ENCODE measurements at regions of chr10 and their contacts with region 1.

Region 1: DNA sequence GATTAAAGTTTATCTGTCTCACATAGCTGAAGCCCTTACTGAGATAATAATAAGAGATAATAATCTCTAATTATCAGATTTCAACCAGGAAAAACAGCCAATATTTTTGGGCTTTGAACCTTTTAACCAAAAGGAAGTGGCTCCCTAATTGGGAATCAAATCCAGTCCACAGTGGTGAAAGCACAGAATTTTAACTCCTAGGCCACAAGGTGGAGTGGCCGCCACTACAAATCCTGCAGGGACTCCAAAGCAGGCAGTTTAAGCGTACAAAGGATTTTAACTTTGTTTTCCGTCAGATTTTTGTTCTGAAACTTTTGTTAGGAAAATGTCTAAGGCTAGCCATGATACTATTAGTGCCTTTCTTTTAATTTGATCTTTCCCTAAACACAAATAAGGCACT is 99.6 kb upstream of the CCNY start:
- DNase-seq: no peak
- H3K4me3 Mint-ChIP-seq: no peak overlapping the region
- H3K27ac Mint-ChIP-seq: no peak overlapping the region
- H3K4me1 Mint-ChIP-seq: no peaks in the 10 kb centered on the region
- H3K27me3 Mint-ChIP-seq: no peaks in the 10 kb centered on the region
- CTCF ChIP-seq: no peak

Region 2: GRCh38 chr10:35225204-35225603 is 11.5 kb before region 1 on chr10:
- CTCF ChIA-PET with region 1: no interaction called
- intact Hi-C with region 1: no loop called
- DNase-seq: no peak
- H3K4me3 Mint-ChIP-seq: no peak overlapping the region
- H3K27ac Mint-ChIP-seq: no peak overlapping the region
- H3K4me1 Mint-ChIP-seq: no peaks in the 10 kb centered on the region
- H3K27me3 Mint-ChIP-seq: no peaks in the 10 kb centered on the region
- CTCF ChIP-seq: no peak

Region 3: DNA sequence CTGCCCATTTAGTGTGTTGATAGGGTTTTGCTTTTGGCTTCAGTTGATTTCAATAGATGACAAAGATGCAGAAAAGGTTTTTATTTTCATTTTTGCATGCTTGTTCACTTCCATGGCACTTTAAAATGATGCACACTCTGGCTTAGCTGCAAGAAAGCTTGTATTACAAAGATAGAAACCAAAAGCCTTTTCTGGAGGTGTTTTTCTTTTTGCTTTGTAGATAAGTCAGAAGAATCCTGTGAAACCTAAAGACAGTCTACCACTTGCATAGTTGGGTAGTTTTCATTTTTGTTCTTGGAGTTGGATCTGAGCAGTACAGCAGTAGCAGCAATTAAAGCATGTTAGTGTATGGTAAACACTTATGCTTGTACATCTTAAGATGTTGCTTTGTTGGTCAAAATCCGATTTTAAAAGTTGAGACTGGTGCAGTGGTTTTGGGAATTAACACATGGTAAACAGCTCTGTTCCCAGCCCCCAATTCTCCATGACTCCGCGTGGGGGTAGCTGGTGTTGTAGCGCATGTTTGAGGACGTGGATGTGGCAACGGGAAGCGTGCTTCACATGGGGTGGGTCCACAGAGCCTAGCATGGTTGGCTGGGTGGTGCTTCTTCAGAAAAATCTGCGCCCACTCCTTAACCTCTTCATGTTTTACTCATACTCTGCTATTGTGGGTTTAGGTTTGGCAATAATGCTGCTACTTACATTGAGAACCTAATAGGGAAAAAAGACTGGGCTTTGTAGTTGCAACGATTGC is 119.4 kb after region 1 on chr10:
- CTCF ChIA-PET with region 1: no interaction called
- intact Hi-C with region 1: no loop called
- DNase-seq: no peak
- H3K4me3 Mint-ChIP-seq: no peak overlapping the region
- H3K27ac Mint-ChIP-seq: no peak overlapping the region
- H3K4me1 Mint-ChIP-seq: peaks cover 21% of the 10 kb centered on the region
- H3K27me3 Mint-ChIP-seq: no peaks in the 10 kb centered on the region
- CTCF ChIP-seq: no peak

Region 4: GRCh38 chr10:35563261-35563891 is 326.6 kb after region 1 on chr10:
- CTCF ChIA-PET with region 1: no interaction called
- intact Hi-C with region 1: loop called (anchors 5 kb)
- DNase-seq: peak; percentile 69
- H3K4me3 Mint-ChIP-seq: no peak overlapping the region
- H3K27ac Mint-ChIP-seq: no peak overlapping the region
- H3K4me1 Mint-ChIP-seq: no peaks in the 10 kb centered on the region
- H3K27me3 Mint-ChIP-seq: no peaks in the 10 kb centered on the region
- CTCF ChIP-seq: peak; percentile 94

Region 5: DNA sequence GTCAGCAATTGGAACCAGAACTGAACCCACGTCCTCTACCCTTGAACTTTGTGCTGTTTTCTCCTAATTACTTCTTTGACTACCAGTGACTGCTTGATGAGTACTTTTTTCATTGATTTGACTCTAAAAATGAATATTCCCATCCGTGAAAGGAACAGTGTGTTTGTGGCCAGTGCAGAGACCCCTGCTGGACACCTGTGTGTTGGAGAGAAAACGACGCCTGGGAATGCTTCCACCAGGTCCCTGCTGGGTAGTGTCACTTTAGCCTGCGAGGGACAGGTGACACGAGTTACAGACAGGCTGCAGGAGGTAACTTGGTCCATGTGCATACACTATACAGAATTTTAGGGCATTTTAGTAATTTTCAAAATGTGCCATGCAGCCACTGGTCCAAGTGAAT is 361.6 kb after region 1 on chr10:
- CTCF ChIA-PET with region 1: no interaction called
- intact Hi-C with region 1: loop called (anchors 2 kb)
- DNase-seq: peak; percentile 35
- H3K4me3 Mint-ChIP-seq: no peak overlapping the region
- H3K27ac Mint-ChIP-seq: no peak overlapping the region
- H3K4me1 Mint-ChIP-seq: no peaks in the 10 kb centered on the region
- H3K27me3 Mint-ChIP-seq: peaks cover 68% of the 10 kb centered on the region
- CTCF ChIP-seq: peak; percentile 32